Panc1 (cell line): ENCODE measurements at regions of chr16 and their contacts with region 1.

Region 1: GRCh38 chr16:85610508-85611332 is 2.4 kb upstream of the GSE1 start:
- DNase-seq: peak; percentile 67
- ATAC-seq: peak; percentile 52
- H3K4me3 ChIP-seq: peak overlapping the region; percentile 60 to 63
- H3K27ac ChIP-seq: peak overlapping the region; percentile 84
- H3K4me1 ChIP-seq: peaks cover 44% of the 10 kb centered on the region
- H3K27me3 ChIP-seq: no peaks in the 10 kb centered on the region
- CTCF ChIP-seq: peak; percentile 92

Region 2: DNA sequence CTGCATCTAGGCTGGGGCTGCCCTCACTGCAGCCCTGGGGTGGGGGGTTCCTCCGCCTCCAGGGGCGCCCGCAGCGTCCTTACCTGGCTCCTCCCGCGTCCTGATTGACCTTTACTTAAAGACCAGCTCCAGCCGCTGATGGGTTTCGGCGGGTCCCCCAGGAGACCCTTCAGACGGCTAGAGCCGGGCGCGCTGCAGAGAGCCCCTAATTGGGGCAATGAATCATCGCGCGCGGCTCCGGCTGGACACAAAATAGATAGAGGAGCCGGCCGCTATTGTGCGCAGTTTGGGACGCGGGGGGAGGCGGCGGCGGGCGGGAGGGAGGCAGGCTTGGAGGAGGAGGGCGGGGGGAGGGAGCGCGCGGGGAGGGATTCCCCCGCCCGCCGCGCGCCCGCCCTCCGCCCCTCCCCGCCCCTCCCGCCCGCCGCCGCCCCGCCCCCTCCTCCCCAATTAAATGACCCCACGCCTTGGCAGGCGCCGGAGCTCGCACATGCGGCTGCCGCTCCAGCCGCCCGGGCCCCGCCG is 441.9 kb before region 1 on chr16:
- CTCF ChIA-PET with region 1: no interaction called
- POLR2A ChIA-PET with region 1: no interaction called
- in situ Hi-C with region 1: no loop called
- intact Hi-C with region 1: no loop called
- DNase-seq: no peak
- ATAC-seq: no peak
- H3K4me3 ChIP-seq: peak overlapping the region in 1 of 2 experiments; percentile 13; a peak in 1 of 4 replicates
- H3K27ac ChIP-seq: no peak overlapping the region
- H3K4me1 ChIP-seq: peaks cover 32% of the 10 kb centered on the region
- H3K27me3 ChIP-seq: no peaks in the 10 kb centered on the region
- CTCF ChIP-seq: no peak

Region 3: GRCh38 chr16:85279825-85280545 is 330.7 kb before region 1 on chr16:
- CTCF ChIA-PET with region 1: interaction called, 11 read pairs
- POLR2A ChIA-PET with region 1: no interaction called
- in situ Hi-C with region 1: no loop called
- intact Hi-C with region 1: no loop called
- DNase-seq: no peak
- ATAC-seq: no peak
- H3K4me3 ChIP-seq: no peak overlapping the region
- H3K27ac ChIP-seq: no peak overlapping the region
- H3K4me1 ChIP-seq: no peaks in the 10 kb centered on the region; the same call in none of the 2 replicates
- H3K27me3 ChIP-seq: no peaks in the 10 kb centered on the region
- CTCF ChIP-seq: no peak

Region 4: DNA sequence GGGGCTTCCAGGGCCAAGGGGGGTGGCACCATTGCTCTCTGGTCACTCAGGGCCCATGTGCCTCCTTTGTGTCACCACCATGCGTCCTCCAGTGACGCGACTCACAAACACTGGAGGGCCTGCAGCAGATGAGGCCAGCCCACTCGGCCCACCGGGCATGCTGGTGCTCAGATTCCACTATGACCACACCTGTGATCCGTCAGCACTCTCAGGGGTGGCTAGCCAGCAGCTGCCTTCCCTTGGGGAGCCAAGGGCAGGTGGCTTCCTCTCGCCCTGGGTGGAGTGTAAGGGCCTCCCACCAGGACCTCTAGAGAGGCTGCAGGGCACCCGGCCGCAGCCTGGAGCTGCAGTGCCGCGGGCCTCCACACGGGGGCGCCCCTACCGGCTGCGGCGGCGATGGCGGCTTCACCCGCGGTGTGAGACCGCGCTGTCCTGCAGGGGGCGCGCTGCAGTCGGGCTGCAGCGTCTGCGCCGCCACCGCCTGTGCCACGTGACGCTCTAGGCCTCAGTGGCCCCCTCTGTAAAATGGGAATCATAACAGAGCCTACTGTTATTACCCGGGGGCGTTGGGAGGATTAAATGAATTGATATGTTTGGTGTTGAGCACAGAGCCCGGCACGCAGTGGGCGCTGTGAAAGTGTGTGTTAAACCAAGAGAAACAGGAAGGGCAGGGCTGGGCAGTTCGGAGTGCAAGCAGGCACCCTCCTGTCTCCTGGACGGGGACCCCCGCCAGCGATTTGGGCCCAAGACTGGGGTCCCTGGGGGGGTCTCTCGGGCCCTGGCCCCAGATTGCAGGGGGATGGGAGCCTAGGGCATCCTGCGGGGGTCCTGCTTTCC is 190.0 kb before region 1 on chr16:
- CTCF ChIA-PET with region 1: no interaction called
- POLR2A ChIA-PET with region 1: no interaction called
- in situ Hi-C with region 1: no loop called
- intact Hi-C with region 1: loop called (anchors 10 kb)
- DNase-seq: no peak
- ATAC-seq: peak; percentile 79
- H3K4me3 ChIP-seq: no peak overlapping the region
- H3K27ac ChIP-seq: no peak overlapping the region
- H3K4me1 ChIP-seq: peaks cover 3% of the 10 kb centered on the region; the same call in 1 of the 2 replicates
- H3K27me3 ChIP-seq: no peaks in the 10 kb centered on the region
- CTCF ChIP-seq: peak; percentile 100